ENCODE measurements at regions of chr9 and their contacts with region 1.

Region 1: DNA sequence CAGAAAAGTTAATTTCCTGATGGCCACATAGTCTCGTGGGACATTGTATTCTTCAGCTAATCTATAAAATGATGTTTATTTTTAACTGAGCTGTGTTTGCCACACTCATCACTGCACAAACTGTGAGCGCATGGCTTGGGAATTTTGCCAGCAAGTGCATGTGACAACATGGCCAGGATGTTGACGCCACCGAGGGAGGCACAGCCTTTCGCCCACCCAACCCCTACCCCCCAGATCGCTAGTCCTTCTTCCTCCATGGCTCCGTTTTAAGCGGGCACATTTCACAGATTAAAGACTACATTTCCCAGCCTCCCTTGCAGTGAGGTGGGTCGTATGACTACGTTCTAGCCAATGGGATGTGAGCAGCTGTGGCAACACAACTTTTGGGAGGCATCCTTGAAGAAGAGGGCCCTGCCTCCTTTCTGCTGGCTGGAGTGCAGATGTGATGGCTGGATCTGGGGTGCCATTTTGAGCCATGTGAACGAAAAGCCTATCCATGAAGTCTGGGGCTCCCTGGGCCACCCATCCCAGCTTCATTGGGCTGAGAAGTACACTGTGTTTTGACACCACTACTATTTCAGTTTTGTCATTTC is 7.9 kb downstream of the NRARP start:
- DNase-seq: peak; percentile 62 to 82 (median 72)
- ATAC-seq: peak; percentile 81
- H3K4me3 ChIP-seq: no peak overlapping the region
- H3K27ac ChIP-seq: no peak overlapping the region
- H3K4me1 ChIP-seq: peaks cover 10 to 47% of the 10 kb centered on the region in 2 experiments; a peak in 4 of 5 replicates
- H3K27me3 ChIP-seq: no peaks in the 10 kb centered on the region
- CTCF ChIP-seq: no peak
- EP300 ChIP-seq: no peak
- POLR2A ChIP-seq: no peak
- RAD21 ChIP-seq: no peak

Region 2: GRCh38 chr9:136820971-136821825 is 473.0 kb before region 1 on chr9:
- CTCF ChIA-PET with region 1: no interaction called
- POLR2A ChIA-PET with region 1: no interaction called
- in situ Hi-C with region 1: no loop called
- intact Hi-C with region 1: no loop called
- DNase-seq: peak in 2 of 4 experiments; percentile 53 to 56
- ATAC-seq: no peak
- H3K4me3 ChIP-seq: no peak overlapping the region
- H3K27ac ChIP-seq: no peak overlapping the region
- H3K4me1 ChIP-seq: peaks cover 0 to 25% of the 10 kb centered on the region in 2 experiments; a peak in 2 of 5 replicates
- H3K27me3 ChIP-seq: no peaks in the 10 kb centered on the region
- CTCF ChIP-seq: no peak
- EP300 ChIP-seq: no peak
- POLR2A ChIP-seq: no peak
- RAD21 ChIP-seq: no peak

Region 3: DNA sequence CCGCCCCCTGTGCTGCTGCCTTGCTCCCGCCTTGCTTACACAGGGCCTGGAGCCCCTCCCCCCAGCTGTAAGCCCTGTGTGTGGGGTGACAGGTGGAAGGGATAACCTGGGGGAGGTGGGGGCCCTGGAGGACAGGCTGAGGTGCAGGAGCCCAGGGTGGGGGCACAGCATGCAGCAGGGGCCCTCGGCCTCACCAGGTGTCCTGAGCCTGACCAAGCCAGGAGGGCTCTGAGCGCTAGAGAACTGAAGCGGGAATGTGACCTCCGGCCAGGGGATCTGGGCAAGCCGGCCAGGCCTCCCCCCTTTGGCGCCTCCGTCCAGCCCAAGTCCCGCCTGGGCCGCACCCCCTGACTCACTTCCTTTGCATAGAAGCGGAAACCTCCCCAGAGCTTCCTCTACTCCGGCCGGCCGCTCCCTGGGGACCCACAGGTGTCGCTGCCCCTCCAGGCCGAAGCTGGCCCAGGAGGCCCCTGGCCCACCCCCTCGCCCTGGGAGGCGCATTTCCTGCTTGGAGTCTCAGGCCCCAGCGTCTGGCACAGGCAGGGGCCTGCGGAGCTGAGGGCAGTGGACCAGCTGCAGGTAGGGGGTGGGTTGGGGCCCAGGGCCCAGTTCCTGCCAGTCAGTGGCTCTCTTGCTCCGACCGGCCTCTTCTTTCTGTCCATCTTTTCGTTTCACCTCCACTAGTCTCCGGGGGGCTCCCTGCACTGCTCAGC is 16.7 kb before region 1 on chr9 and contains the start of gene TOR4A:
- CTCF ChIA-PET with region 1: interaction called, 8 read pairs
- POLR2A ChIA-PET with region 1: interaction called, 12 read pairs
- in situ Hi-C with region 1: no loop called
- intact Hi-C with region 1: no loop called
- DNase-seq: peak; percentile 90 to 97 (median 92)
- ATAC-seq: peak; percentile 93
- H3K4me3 ChIP-seq: peak within 1 kb of the TSS; percentile 88
- H3K27ac ChIP-seq: peak within 1 kb of the TSS; percentile 98
- H3K4me1 ChIP-seq: peaks cover 17 to 93% of the 10 kb centered on the region in 2 experiments
- H3K27me3 ChIP-seq: no peaks in the 10 kb centered on the region
- CTCF ChIP-seq: peak; percentile 63 to 81 (median 74)
- EP300 ChIP-seq: peak; percentile 47; the same call in 1 of the 2 replicates
- POLR2A ChIP-seq: peak; percentile 85
- RAD21 ChIP-seq: peak; percentile 33 to 58
- polyA plus RNA-seq, gene TOR4A: 3.9 to 7.0 TPM

Region 4: GRCh38 chr9:137524984-137525323 is 230.8 kb after region 1 on chr9:
- CTCF ChIA-PET with region 1: no interaction called
- POLR2A ChIA-PET with region 1: no interaction called
- in situ Hi-C with region 1: loop called (anchors 5 kb)
- intact Hi-C with region 1: no loop called
- DNase-seq: no peak
- ATAC-seq: no peak
- H3K4me3 ChIP-seq: no peak overlapping the region
- H3K27ac ChIP-seq: no peak overlapping the region
- H3K4me1 ChIP-seq: peaks cover 0 to 20% of the 10 kb centered on the region in 2 experiments; a peak in 2 of 5 replicates
- H3K27me3 ChIP-seq: no peaks in the 10 kb centered on the region
- CTCF ChIP-seq: no peak
- EP300 ChIP-seq: no peak
- POLR2A ChIP-seq: no peak
- RAD21 ChIP-seq: no peak